ENCODE measurements at regions of chr1 and their contacts with region 1.

Region 1: DNA sequence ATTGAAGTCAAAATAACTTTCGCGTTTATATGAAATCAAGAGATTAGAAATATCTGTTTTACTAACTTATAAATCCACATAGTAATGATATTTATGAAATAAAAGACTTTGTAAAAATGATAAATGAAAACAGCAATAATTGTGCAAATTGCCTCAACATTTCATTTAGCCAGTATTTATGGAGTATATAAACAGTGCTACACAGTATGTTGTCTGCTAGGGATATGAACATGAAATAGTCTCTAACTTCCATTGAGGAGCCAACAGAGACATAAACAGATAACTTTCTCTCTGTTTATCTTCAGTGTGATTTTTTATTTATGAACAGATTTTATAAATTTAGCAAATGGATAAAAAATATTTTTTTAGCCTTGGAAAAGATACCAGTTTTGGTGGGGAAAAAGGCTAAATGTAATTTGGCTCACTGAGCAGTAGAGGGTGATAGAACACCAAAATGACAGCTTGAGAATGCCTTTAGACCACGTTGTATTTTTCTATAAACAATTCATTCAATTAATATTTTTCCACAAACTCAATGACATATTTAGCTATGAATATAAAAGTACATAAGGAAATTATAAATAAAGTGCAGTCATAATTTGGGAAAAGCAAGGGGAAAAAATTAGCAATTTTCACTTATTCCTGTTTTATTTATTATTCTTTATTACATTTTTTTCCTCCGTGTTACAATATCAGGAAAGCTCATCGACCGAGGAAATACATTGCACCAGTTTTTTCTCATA is 47.5 kb upstream of the EEIG2 start:
- DNase-seq: peak in 4 of 14 experiments; percentile 6 to 75 (median 69)
- ATAC-seq: peak; percentile 77
- H3K4me3 ChIP-seq: no peak overlapping the region
- H3K4me3 Mint-ChIP-seq: no peak overlapping the region
- H3K27ac ChIP-seq: no peak overlapping the region
- H3K27ac Mint-ChIP-seq: no peak overlapping the region
- H3K4me1 ChIP-seq: no peaks in the 10 kb centered on the region
- H3K4me1 Mint-ChIP-seq: no peaks in the 10 kb centered on the region
- H3K27me3 ChIP-seq: peaks cover 0 to 10% of the 10 kb centered on the region in 2 experiments
- H3K27me3 Mint-ChIP-seq: peaks cover 13% of the 10 kb centered on the region
- CTCF ChIP-seq: peak; percentile 99

Region 2: GRCh38 chr1:108541861-108542260 is 29.5 kb after region 1 on chr1:
- CTCF ChIA-PET with region 1: no interaction called
- POLR2A ChIA-PET with region 1: no interaction called
- intact Hi-C with region 1: no loop called
- DNase-seq: no peak
- ATAC-seq: no peak
- H3K4me3 ChIP-seq: no peak overlapping the region
- H3K4me3 Mint-ChIP-seq: no peak overlapping the region
- H3K27ac ChIP-seq: no peak overlapping the region
- H3K27ac Mint-ChIP-seq: no peak overlapping the region
- H3K4me1 ChIP-seq: no peaks in the 10 kb centered on the region
- H3K4me1 Mint-ChIP-seq: no peaks in the 10 kb centered on the region
- H3K27me3 ChIP-seq: peaks cover 0 to 3% of the 10 kb centered on the region in 2 experiments
- H3K27me3 Mint-ChIP-seq: peaks cover 29% of the 10 kb centered on the region
- CTCF ChIP-seq: no peak

Region 3: GRCh38 chr1:108708691-108709660 is 196.6 kb after region 1 on chr1:
- CTCF ChIA-PET with region 1: interaction called, 3 read pairs
- POLR2A ChIA-PET with region 1: no interaction called
- intact Hi-C with region 1: loop called in 1 of 2 experiments (anchors 5 kb)
- DNase-seq: peak; percentile 41 to 83 (median 61)
- ATAC-seq: peak; percentile 79
- H3K4me3 ChIP-seq: no peak overlapping the region
- H3K4me3 Mint-ChIP-seq: no peak overlapping the region
- H3K27ac ChIP-seq: no peak overlapping the region
- H3K27ac Mint-ChIP-seq: no peak overlapping the region
- H3K4me1 ChIP-seq: peaks cover 28% of the 10 kb centered on the region
- H3K4me1 Mint-ChIP-seq: peaks cover 29% of the 10 kb centered on the region
- H3K27me3 ChIP-seq: no peaks in the 10 kb centered on the region
- H3K27me3 Mint-ChIP-seq: no peaks in the 10 kb centered on the region
- CTCF ChIP-seq: peak; percentile 49